Calu3 (cell line): ENCODE measurements at regions of chr6 and their contacts with region 1.

Region 1: DNA sequence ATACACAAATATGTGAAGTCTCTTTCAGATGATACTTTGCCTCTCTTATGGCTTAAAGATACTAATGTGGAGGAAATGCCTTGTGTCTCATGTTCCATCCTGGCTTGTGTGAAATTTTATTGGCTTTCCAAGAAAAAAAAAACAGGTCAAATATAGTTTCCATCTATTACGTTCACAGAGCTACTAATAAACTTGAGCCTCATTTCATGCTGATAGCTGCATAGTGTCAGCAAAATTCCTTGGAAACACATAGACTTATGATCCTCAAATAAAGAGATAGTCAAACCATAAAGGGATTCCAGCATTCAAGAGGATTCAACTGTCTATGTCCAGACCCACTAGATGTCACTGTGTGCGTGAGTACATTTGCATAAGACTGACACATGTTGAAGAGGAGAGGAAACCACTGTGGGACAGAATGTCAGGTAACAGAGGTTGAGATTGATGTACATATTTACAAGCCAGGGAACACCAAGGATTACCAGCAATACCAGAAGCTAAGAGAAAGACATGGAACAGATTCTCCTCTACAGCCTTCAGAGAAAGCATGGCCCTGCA is 266.6 kb downstream of the COL12A1 start:
- DNase-seq: no peak
- H3K4me3 Mint-ChIP-seq: no peak overlapping the region
- H3K27ac Mint-ChIP-seq: no peak overlapping the region
- H3K4me1 Mint-ChIP-seq: no peaks in the 10 kb centered on the region
- H3K27me3 Mint-ChIP-seq: no peaks in the 10 kb centered on the region
- CTCF ChIP-seq: no peak

Region 2: GRCh38 chr6:74606581-74607071 is 332.6 kb before region 1 on chr6:
- CTCF ChIA-PET with region 1: no interaction called
- intact Hi-C with region 1: no loop called
- DNase-seq: peak; percentile 4
- H3K4me3 Mint-ChIP-seq: no peak overlapping the region
- H3K27ac Mint-ChIP-seq: no peak overlapping the region
- H3K4me1 Mint-ChIP-seq: peaks cover 16% of the 10 kb centered on the region
- H3K27me3 Mint-ChIP-seq: no peaks in the 10 kb centered on the region
- CTCF ChIP-seq: no peak

Region 3: DNA sequence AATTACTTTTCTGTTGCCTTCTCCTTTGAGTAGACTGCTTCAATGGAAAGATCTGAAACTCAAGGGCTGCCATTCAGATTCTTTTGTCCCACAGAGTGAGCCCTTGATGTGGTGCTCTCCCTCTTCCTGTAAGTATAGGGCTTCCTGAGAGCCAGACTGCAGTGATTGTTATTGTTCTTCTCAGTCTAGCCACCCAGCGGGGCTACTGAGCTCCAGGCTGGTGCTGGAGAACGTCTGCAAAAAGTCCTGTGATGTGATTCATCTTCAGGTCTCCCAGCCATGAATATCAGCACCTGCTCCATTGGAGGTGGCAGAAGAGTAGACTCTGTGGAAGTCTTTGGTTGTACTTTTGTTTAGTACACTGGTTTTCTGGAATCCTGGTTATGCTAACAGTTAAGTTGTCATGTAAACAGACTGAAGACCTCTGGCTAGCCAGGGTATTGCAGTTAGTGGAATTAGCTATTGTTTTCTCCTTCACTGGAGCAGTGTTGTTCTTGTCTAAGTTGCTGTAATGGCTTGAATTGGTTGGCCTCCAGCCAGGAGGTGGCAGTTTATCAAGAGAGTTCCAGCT is 25.7 kb after region 1 on chr6:
- CTCF ChIA-PET with region 1: no interaction called
- intact Hi-C with region 1: no loop called
- DNase-seq: no peak
- H3K4me3 Mint-ChIP-seq: no peak overlapping the region
- H3K27ac Mint-ChIP-seq: no peak overlapping the region
- H3K4me1 Mint-ChIP-seq: peaks cover 11% of the 10 kb centered on the region
- H3K27me3 Mint-ChIP-seq: no peaks in the 10 kb centered on the region
- CTCF ChIP-seq: no peak

Region 4: GRCh38 chr6:75098709-75099108 is 159.5 kb after region 1 on chr6:
- CTCF ChIA-PET with region 1: no interaction called
- intact Hi-C with region 1: loop called (anchors 5 kb)
- DNase-seq: peak; percentile 49
- H3K4me3 Mint-ChIP-seq: no peak overlapping the region
- H3K27ac Mint-ChIP-seq: peak overlapping the region; percentile 71
- H3K4me1 Mint-ChIP-seq: peaks cover 25% of the 10 kb centered on the region
- H3K27me3 Mint-ChIP-seq: no peaks in the 10 kb centered on the region
- CTCF ChIP-seq: no peak